ENCODE measurements at regions of chr6 and their contacts with region 1.

Region 1: GRCh38 chr6:152552616-152553209 is 84.4 kb downstream of the SYNE1 start:
- DNase-seq: no peak
- H3K4me3 ChIP-seq: no peak overlapping the region
- H3K27ac ChIP-seq: no peak overlapping the region
- H3K4me1 ChIP-seq: no peaks in the 10 kb centered on the region
- H3K27me3 ChIP-seq: no peaks in the 10 kb centered on the region
- CTCF ChIP-seq: peak; percentile 34 to 83 (median 76)
- POLR2A ChIP-seq: no peak

Region 2: DNA sequence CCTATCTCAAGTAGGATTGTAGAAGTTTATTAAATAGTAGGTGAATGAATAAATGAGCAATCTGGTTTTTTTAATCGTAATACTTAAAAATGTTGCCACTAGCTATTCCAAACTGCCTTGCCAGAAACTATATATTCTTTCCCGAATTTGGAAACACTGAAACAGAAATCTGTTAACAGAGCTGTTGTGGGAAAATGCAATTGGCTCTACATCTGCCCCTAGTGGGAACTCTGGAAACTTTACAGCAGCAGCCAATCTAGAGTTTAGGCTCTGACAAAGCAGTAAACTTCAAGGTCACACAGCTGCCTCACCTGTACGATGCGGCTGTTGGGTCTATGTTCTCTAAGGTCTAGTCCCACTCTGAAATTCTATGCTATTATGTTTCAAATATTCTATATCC is 42.8 kb after region 1 on chr6:
- intact Hi-C with region 1: no loop called
- DNase-seq: no peak
- H3K4me3 ChIP-seq: no peak overlapping the region
- H3K27ac ChIP-seq: no peak overlapping the region
- H3K4me1 ChIP-seq: peaks cover 0 to 5% (median 0%) of the 10 kb centered on the region in 3 donors
- H3K27me3 ChIP-seq: no peaks in the 10 kb centered on the region
- CTCF ChIP-seq: peak in 4 of 6 experiments; percentile 9 to 33 (median 21)
- POLR2A ChIP-seq: no peak

Region 3: GRCh38 chr6:152642989-152643388 is 90.3 kb after region 1 on chr6:
- intact Hi-C with region 1: loop called (anchors 2 kb)
- DNase-seq: no peak
- H3K4me3 ChIP-seq: no peak overlapping the region
- H3K27ac ChIP-seq: no peak overlapping the region
- H3K4me1 ChIP-seq: peaks cover 0 to 5% (median 0%) of the 10 kb centered on the region in 3 donors
- H3K27me3 ChIP-seq: peaks cover 0 to 5% (median 0%) of the 10 kb centered on the region in 4 donors
- CTCF ChIP-seq: peak in 5 of 6 experiments; percentile 36 to 68 (median 47)
- POLR2A ChIP-seq: no peak